ENCODE measurements at regions of chr1 and their contacts with region 1.

Region 1: DNA sequence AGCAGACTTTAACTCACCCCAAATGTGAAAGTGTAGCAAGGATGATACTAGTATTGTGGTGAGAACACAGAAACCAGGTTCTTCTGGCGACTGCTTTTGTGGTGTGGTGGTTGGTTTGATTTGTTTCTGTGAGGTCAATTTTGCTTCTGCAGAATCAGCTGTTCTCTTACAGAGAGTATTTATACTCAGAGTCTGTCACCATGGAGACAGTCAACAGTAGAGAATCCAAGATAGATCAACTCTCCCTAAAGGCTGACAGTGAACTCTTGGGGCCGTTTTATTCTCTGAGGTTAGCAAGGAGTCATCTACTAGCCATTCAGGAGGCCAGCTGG is at the start of gene CFAP107:
- H3K4me3 ChIP-seq: no peak within 1 kb of the TSS
- H3K27ac ChIP-seq: no peak within 1 kb of the TSS
- H3K4me1 ChIP-seq: no peaks in the 10 kb centered on the region
- CTCF ChIP-seq: no peak

Region 2: GRCh38 chr1:12658531-12659453 is 87.2 kb before region 1 on chr1:
- CTCF ChIA-PET with region 1: no interaction called
- POLR2A ChIA-PET with region 1: no interaction called
- H3K4me3 ChIP-seq: no peak overlapping the region
- H3K27ac ChIP-seq: no peak overlapping the region
- H3K4me1 ChIP-seq: no peaks in the 10 kb centered on the region
- CTCF ChIP-seq: peak; percentile 85

Region 3: GRCh38 chr1:12764016-12764415 is 18.1 kb after region 1 on chr1:
- CTCF ChIA-PET with region 1: no interaction called
- POLR2A ChIA-PET with region 1: interaction called, 14 read pairs
- H3K4me3 ChIP-seq: no peak overlapping the region
- H3K27ac ChIP-seq: no peak overlapping the region
- H3K4me1 ChIP-seq: no peaks in the 10 kb centered on the region
- CTCF ChIP-seq: no peak